GM12878 (cell line): ENCODE measurements at regions of chr3 and their contacts with region 1.

Region 1: DNA sequence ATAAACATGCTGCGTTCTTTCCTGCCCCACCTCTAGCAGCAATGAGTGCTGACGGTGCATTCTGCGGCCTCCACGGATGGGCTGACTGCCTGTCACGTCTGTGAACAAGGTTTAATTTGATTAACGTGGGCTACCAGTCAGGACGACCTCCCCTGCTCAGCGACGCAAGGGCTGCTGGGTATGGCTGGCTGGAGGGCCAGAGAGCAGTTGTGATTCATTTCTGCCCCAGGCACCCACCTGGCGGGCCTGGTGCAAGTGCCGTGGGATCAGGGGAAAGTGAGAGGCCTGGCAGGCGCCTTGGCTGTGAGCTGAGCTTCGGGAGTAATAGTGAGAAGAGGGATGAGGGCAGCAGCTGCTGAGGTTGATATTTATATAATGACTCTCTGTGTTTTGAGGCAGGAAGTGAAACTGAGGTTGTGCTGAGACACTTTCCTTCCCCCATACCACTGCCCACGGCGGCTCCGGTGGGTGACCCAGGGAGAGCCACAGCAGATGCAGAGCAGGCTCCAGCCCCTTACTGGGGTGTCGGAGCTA is 190.4 kb upstream of the BCL6 start:
- DNase-seq: peak; percentile 66
- ATAC-seq: peak; percentile 97
- H3K4me3 ChIP-seq: no peak overlapping the region
- H3K27ac ChIP-seq: no peak overlapping the region
- H3K4me1 ChIP-seq: peaks cover 19% of the 10 kb centered on the region
- H3K27me3 ChIP-seq: peaks cover 0 to 4% of the 10 kb centered on the region in 2 experiments; a peak in 2 of 4 replicates
- CTCF ChIP-seq: no peak
- EP300 ChIP-seq: peak; percentile 89 to 93; a peak in 3 of 4 replicates
- POLR2A ChIP-seq: no peak
- RAD21 ChIP-seq: peak; percentile 10; the same call in 1 of the 2 replicates

Region 2: GRCh38 chr3:187791434-187791833 is 144.3 kb before region 1 on chr3:
- CTCF ChIA-PET with region 1: no interaction called
- POLR2A ChIA-PET with region 1: no interaction called
- RAD21 ChIA-PET with region 1: no interaction called
- SMC1A ChIA-PET with region 1: no interaction called
- in situ Hi-C with region 1: no loop called
- intact Hi-C with region 1: no loop called
- DNase-seq: no peak
- ATAC-seq: no peak
- H3K4me3 ChIP-seq: no peak overlapping the region
- H3K27ac ChIP-seq: no peak overlapping the region
- H3K4me1 ChIP-seq: no peaks in the 10 kb centered on the region
- H3K27me3 ChIP-seq: peaks cover 6 to 8% of the 10 kb centered on the region in 2 experiments
- CTCF ChIP-seq: no peak
- EP300 ChIP-seq: no peak
- POLR2A ChIP-seq: no peak
- RAD21 ChIP-seq: no peak

Region 3: GRCh38 chr3:187889601-187890404 is 45.9 kb before region 1 on chr3:
- CTCF ChIA-PET with region 1: no interaction called
- POLR2A ChIA-PET with region 1: no interaction called
- RAD21 ChIA-PET with region 1: no interaction called
- SMC1A ChIA-PET with region 1: no interaction called
- in situ Hi-C with region 1: no loop called
- intact Hi-C with region 1: no loop called
- DNase-seq: no peak
- ATAC-seq: peak; percentile 38; the same call in 2 of the 3 replicates
- H3K4me3 ChIP-seq: no peak overlapping the region
- H3K27ac ChIP-seq: no peak overlapping the region
- H3K4me1 ChIP-seq: peaks cover 3% of the 10 kb centered on the region; the same call in 1 of the 2 replicates
- H3K27me3 ChIP-seq: no peaks in the 10 kb centered on the region
- CTCF ChIP-seq: no peak
- EP300 ChIP-seq: no peak
- POLR2A ChIP-seq: no peak
- RAD21 ChIP-seq: no peak

Region 4: GRCh38 chr3:187919048-187919447 is 16.6 kb before region 1 on chr3:
- CTCF ChIA-PET with region 1: interaction called, 3 read pairs
- POLR2A ChIA-PET with region 1: no interaction called
- RAD21 ChIA-PET with region 1: interaction called, 3 read pairs
- SMC1A ChIA-PET with region 1: interaction called, 8 read pairs
- in situ Hi-C with region 1: no loop called
- intact Hi-C with region 1: loop called (anchors 1 kb)
- DNase-seq: peak; percentile 40
- ATAC-seq: peak; percentile 90
- H3K4me3 ChIP-seq: no peak overlapping the region
- H3K27ac ChIP-seq: no peak overlapping the region
- H3K4me1 ChIP-seq: peaks cover 18% of the 10 kb centered on the region
- H3K27me3 ChIP-seq: peaks cover 0 to 2% of the 10 kb centered on the region in 2 experiments; a peak in 1 of 4 replicates
- CTCF ChIP-seq: no peak
- EP300 ChIP-seq: 0 out of 4 replicates have a peak, but pooled peaks of 1 of the 2 experiments have one; percentile 55
- POLR2A ChIP-seq: no peak
- RAD21 ChIP-seq: 0 out of 2 replicates have a peak, but pooled peaks have one; percentile 3

Region 5: DNA sequence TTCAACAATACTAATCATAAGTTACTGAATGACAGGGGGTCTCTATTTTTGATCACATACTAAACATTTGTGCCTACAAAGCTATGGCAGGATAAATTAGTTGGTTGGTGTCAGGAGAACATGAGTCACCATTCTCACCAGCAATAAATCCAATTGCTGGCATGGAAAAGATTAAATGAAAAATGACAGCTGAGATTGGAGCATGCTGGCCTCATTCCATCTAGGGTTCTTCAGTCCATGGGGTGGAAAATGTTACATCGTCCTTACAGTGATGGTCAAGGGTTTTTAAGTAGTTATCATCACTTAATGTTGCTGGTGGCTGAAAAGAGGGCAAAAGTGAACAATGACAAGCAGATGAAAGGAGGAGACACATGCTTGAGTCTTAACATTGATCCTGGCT is 10.4 kb before region 1 on chr3:
- CTCF ChIA-PET with region 1: interaction called, 3 read pairs
- POLR2A ChIA-PET with region 1: no interaction called
- RAD21 ChIA-PET with region 1: interaction called, 4 read pairs
- SMC1A ChIA-PET with region 1: interaction called, 13 read pairs
- in situ Hi-C with region 1: no loop called
- intact Hi-C with region 1: no loop called
- DNase-seq: no peak
- ATAC-seq: no peak
- H3K4me3 ChIP-seq: no peak overlapping the region
- H3K27ac ChIP-seq: no peak overlapping the region
- H3K4me1 ChIP-seq: peaks cover 2% of the 10 kb centered on the region
- H3K27me3 ChIP-seq: peaks cover 0 to 2% of the 10 kb centered on the region in 2 experiments; a peak in 2 of 4 replicates
- CTCF ChIP-seq: no peak
- EP300 ChIP-seq: no peak
- POLR2A ChIP-seq: no peak
- RAD21 ChIP-seq: no peak